ENCODE measurements at regions of chr11 and their contacts with region 1.

Region 1: GRCh38 chr11:7239877-7240276 is 11.8 kb upstream of the SYT9 start:
- DNase-seq: no peak

Region 2: GRCh38 chr11:7639643-7640025 is 399.8 kb after region 1 on chr11:
- intact Hi-C with region 1: loop called in 1 of 2 experiments (anchors 10 kb)
- DNase-seq: no peak

Measured in posterior vena cava (tissue), 2 donors.